ENCODE measurements at regions of chr5 and their contacts with region 1.

Region 1: DNA sequence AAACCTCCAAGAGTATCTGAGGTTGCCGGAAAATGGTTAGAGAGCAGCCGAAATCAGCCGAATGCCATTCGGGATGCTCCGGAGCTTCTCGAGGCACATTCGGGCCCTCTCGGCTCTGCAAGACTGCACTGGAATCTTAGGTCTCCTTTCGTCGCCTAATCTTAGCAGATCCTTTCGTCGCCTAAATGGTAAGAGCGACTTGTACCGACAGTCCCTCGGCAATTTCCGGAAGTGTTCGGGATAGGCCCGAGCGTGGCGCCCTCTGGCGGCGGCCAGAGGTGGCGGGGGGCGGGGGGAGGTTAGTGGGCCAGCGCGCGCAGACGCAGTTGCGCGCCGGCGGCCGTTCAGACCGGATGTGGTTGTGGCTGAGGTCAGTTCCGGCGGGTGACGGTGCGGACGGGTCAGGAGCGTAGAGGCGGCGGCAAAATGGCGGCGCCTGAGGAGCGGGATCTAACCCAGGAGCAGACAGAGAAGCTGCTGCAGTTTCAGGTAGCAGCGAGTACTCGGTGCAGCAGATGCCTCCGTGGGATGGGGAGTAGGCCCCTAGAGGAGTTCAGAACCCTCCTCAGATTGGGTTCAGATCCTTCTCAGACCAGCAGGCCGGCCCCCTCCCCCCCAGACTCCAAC is at the start of gene FAF2:
- DNase-seq: peak; percentile 100

Region 2: GRCh38 chr5:176319827-176320554 is 128.1 kb before region 1 on chr5:
- CTCF ChIA-PET with region 1: no interaction called
- POLR2A ChIA-PET with region 1: no interaction called
- DNase-seq: no peak

Region 3: DNA sequence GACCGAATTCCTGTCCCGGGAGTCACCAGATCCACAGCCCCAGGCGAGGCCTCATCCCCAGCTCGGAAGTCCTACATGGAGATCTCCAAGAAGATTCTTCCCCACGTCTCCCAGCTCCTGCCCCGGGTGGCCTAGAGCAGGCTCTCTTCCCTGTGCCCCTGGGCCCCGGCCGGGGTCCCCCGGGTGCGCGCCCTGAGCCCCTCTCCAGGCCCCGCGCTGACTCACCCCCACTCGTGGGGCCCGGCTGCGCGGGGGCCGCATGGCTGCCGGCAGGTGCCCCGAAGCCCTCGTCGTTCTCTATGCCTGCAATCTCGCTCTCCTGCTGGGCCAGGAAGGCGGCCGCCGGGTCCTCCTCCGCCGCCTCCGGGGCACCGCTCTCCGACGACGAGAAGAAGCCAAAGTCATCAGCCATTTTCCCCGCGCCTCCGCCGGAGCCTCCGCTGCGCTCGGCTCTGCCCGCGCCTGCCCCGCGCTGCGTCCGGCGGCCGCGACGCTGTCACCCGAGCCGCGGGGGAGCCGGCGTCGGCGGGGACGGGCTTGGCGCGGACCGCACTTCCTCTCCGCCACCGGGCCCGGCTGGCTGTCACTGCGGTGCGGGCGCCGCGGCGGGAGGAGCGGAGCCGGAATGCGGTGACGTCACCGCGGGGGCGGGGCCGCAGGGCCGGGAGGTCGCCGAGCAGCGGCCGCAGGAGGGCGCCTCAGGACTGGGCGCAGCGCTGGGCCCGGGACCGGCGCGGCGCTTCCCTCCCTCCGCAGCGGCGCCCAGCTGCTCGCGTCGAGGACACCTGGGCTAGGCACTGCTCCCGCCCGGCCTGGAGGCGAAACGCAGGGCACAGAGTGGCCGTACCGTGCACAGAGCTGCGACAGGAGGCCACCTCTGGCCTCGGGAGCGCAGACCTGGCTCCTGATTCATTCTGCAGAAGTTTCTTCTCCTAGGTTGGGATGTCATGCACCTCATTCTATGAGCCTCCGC is 31.9 kb before region 1 on chr5 and contains the start of gene CLTB:
- CTCF ChIA-PET with region 1: interaction called, 8 read pairs
- POLR2A ChIA-PET with region 1: interaction called, 12 read pairs
- DNase-seq: peak; percentile 99

Region 4: GRCh38 chr5:176429972-176430371 is 18.1 kb before region 1 on chr5:
- CTCF ChIA-PET with region 1: interaction called, 5 read pairs
- POLR2A ChIA-PET with region 1: interaction called, 10 read pairs
- DNase-seq: no peak

Region 5: DNA sequence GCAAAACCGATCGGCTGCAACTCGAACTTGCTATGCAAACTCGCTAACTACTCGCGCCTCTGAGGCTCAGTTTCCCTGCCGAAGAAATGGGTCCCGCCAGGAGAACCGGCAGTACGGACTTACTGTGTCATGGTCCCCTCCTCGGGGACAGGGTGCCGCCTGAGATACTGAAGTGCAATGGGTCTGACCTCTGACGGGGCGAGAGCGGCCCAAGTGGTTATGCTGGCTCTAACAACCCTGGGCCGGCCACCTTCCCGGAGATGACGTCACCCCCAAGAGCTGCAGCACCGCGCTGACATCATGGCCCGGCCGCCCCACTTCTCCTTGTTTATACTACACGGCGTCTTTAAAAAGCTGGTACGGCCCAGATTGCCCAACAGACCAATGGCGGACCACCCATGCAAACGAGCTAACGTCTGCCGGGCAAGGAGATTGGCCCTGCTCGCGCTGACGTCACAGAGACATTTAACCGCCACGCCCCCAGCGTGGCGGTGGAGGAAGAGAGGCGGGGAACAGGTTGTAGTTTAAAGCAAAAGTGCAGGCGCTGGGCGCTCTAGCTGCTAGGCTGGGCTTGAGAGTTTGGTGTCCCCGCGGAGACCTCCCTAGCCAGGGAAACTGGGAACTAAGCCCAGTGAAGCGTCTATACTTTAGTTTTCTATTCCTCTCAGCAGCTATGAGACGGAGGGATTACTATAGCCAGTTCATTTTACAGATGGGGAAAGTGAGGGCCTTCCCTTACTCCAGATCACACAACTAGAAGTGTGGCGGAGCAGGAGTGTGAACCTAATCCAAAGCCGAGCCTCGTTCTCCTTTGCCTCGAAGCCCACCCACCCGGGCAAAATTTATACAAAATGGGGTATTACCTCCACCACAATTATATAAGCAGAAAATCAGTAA is 89.8 kb after region 1 on chr5:
- CTCF ChIA-PET with region 1: interaction called, 6 read pairs
- POLR2A ChIA-PET with region 1: interaction called, 27 read pairs
- DNase-seq: peak; percentile 93

Region 6: GRCh38 chr5:176543428-176544173 is 95.5 kb after region 1 on chr5:
- CTCF ChIA-PET with region 1: interaction called, 6 read pairs
- POLR2A ChIA-PET with region 1: interaction called, 27 read pairs
- DNase-seq: peak; percentile 77

Measured in HEK293T (cell line).